IMR-90 (cell line): ENCODE measurements at regions of chr15 and their contacts with region 1.

Region 1: DNA sequence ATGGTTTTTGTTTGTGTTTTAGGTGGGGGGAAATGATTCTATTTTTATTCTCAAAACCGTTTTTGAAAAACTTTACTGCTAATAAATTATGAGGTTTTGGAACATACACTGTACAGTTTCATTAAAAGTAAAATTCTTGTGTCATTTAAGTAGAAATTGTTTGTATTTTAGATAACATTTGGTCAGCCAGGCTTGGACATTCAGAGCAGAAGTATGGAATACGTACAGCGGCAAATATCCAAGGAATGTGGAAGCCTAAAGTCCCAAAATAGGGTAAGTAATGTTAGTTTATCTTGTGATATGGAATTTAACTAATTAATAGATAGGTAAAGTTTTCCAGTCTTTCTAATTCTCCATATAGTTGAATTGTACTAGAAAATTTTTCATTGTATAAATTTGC is 96.6 kb downstream of the SPRED1 start:
- DNase-seq: peak; percentile 62
- ATAC-seq: peak; percentile 72
- H3K4me3 ChIP-seq: no peak overlapping the region
- H3K27ac ChIP-seq: no peak overlapping the region
- H3K4me1 ChIP-seq: peaks cover 7% of the 10 kb centered on the region; the same call in 1 of the 2 replicates
- H3K27me3 ChIP-seq: no peaks in the 10 kb centered on the region
- CTCF ChIP-seq: no peak
- POLR2A ChIP-seq: no peak
- RAD21 ChIP-seq: no peak

Region 2: GRCh38 chr15:38266247-38266986 is 82.8 kb before region 1 on chr15:
- CTCF ChIA-PET with region 1: no interaction called
- POLR2A ChIA-PET with region 1: no interaction called
- dilution Hi-C with region 1: no loop called
- in situ Hi-C with region 1: no loop called
- intact Hi-C with region 1: loop called (anchors 5 kb)
- DNase-seq: no peak
- ATAC-seq: peak; percentile 38
- H3K4me3 ChIP-seq: no peak overlapping the region
- H3K27ac ChIP-seq: 0 out of 2 replicates have a peak overlapping the region, but pooled peaks have one; percentile 22
- H3K4me1 ChIP-seq: peaks cover 15% of the 10 kb centered on the region; the same call in 1 of the 2 replicates
- H3K27me3 ChIP-seq: no peaks in the 10 kb centered on the region
- CTCF ChIP-seq: no peak
- POLR2A ChIP-seq: no peak
- RAD21 ChIP-seq: no peak

Region 3: DNA sequence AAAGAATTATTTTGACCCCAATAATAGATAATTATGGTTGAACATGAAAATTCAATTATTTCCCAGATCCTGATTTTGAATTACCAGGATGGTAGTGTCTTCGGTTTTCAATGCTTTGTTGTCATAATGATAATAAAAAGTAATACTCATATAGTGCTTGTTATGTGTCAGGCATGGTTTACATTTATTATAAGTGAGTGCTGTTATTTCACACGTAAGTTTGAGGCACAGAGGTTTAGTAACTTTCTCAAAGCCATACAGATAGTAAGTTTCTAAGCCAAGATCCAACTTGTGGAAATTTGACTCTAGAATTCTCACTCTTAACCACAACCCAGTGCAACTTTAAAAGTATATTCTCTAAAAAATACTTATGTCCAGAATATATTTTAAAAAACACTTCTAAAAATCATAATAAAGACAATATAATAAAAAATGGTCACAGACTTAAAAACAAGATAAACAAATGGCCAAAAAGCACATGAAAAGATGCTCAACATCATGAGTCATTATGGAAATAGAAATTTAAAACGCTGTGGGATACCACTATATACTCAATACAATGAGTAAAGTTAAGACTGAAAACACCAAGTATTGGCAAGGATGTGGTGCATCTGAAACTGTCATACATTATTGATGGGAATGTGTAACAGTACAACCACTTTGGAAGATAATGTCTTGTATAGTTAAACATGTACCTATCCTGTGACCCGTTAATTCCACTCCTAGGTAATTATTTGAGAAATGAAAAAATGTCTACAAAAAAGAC is 51.4 kb before region 1 on chr15:
- CTCF ChIA-PET with region 1: no interaction called
- POLR2A ChIA-PET with region 1: no interaction called
- dilution Hi-C with region 1: no loop called
- in situ Hi-C with region 1: no loop called
- intact Hi-C with region 1: loop called (anchors 5 kb)
- DNase-seq: peak; percentile 62
- ATAC-seq: no peak
- H3K4me3 ChIP-seq: no peak overlapping the region
- H3K27ac ChIP-seq: no peak overlapping the region
- H3K4me1 ChIP-seq: peaks cover 2% of the 10 kb centered on the region
- H3K27me3 ChIP-seq: no peaks in the 10 kb centered on the region
- CTCF ChIP-seq: no peak
- POLR2A ChIP-seq: no peak
- RAD21 ChIP-seq: no peak